Right ventricle myocardium inferior (tissue), 1 donor: ENCODE measurements at regions of chr9 and their contacts with region 1.

Region 1: DNA sequence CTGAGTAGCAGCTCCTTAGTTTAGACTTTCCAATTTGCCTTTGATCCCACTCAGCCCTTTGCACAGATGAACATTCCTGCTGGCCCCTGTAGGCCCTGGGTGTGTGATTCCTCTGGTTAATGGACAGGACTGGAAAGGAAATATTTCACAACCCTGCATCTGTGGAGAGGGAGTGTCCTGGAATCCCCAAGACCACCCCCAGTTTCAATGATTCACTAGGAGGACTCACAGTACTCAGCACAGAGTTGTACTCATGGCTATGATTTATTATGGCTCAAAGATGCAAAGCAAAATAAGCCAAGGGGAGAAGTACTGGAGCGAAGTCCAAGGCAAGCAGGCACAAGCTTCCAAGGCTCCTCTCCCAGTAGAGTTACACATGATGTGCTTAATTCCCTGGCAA is 42.4 kb upstream of the TJP2 start:
- DNase-seq: no peak
- ATAC-seq: peak; percentile 63

Region 2: GRCh38 chr9:68804911-68805889 is 326.5 kb before region 1 on chr9:
- intact Hi-C with region 1: no loop called
- DNase-seq: no peak
- ATAC-seq: peak; percentile 93

Region 3: GRCh38 chr9:68919661-68920060 is 212.0 kb before region 1 on chr9:
- intact Hi-C with region 1: no loop called
- DNase-seq: no peak
- ATAC-seq: no peak

Region 4: DNA sequence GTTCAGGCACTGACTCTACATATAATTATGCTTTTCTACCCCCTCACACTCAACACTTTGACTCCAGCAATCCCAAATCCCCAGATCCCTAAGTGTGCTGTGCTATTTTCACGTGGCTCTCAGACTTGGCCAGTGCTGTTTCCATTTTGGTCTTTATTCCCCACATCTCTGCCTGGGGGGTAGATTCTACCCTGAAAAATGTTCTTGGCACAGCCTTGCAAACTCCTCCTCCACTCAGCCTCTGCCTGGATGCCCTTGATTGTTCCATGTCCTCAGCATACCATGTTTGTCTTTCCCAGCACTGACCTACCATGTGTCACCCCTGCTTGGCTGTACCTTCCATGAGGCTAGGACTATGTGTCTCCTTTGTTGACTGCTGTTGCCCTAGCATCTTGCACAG is 53.1 kb before region 1 on chr9:
- intact Hi-C with region 1: loop called (anchors 5 kb)
- DNase-seq: no peak
- ATAC-seq: peak; percentile 97

Region 5: GRCh38 chr9:69174616-69175463 is 43.2 kb after region 1 on chr9:
- intact Hi-C with region 1: loop called (anchors 5 kb)
- DNase-seq: no peak
- ATAC-seq: peak; percentile 53

Region 6: GRCh38 chr9:69184266-69184665 is 52.6 kb after region 1 on chr9:
- intact Hi-C with region 1: loop called (anchors 2 kb)
- DNase-seq: no peak
- ATAC-seq: no peak